ENCODE measurements at regions of chr20 and their contacts with region 1.

Region 1: DNA sequence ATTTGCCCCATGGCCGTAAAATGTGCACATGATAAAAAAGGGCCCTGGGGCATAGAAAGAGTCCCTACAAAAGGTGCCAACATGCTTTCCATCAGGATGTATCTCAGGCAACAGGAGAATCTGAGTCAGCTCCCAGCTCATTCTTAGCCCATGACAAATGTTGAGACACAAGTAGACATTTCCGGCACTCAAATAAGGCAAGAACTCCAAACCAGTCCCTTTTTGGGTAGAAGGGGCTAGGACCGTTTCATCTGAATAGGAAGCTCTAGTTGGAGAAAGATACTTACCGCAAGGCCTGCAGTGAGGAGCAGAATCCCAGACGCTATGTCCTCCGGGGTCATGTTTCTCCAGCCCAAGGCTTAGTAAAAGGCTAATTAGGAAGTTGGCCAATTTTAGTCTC is 261.0 kb upstream of the RIN2 start:
- DNase-seq: no peak
- H3K4me3 ChIP-seq: no peak overlapping the region
- H3K27ac ChIP-seq: peak overlapping the region; percentile 75 to 81
- H3K4me1 ChIP-seq: peaks cover 0 to 67% (median 55%) of the 10 kb centered on the region in 4 donors
- H3K27me3 ChIP-seq: no peaks in the 10 kb centered on the region
- CTCF ChIP-seq: no peak

Region 2: DNA sequence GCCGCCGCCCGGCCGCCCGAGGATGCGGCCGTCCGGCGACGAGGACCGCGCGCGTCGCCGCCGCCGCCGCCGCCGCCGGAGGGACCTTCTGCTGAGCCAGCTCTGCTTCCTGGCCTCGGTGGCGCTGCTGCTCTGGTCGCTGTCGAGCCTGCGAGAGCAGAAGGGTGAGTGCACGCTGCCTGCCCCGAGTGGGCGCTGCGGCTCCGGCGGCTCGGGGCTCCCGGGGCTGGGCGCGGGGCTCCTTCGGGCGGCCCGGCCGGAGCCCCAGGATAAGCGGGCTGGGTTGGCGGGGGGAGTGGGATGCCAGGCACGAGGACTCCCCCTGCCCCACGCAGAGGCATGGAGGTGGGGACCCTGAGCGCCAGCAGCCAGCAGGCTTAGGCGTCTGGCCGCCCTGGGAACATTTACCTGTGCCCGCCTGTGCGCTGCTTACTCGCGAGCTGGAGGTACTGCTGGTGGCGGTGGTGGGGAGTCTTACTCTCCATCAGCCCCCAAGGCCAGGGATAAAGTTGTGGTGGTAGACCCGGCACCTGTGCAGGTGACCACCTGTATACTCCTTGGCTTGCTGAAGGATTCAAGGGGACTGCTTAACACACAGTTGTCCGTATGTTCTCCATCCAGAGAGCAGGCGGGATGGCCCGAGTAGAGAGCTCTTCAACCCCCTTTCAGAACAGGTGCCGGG is 284.1 kb before region 1 on chr20:
- intact Hi-C with region 1: loop called (anchors 5 kb)
- DNase-seq: peak; percentile 68 to 87
- H3K4me3 ChIP-seq: peak overlapping the region; percentile 80 to 81
- H3K27ac ChIP-seq: peak overlapping the region; percentile 79 to 84
- H3K4me1 ChIP-seq: peaks cover 0 to 51% (median 25%) of the 10 kb centered on the region in 4 donors
- H3K27me3 ChIP-seq: no peaks in the 10 kb centered on the region
- CTCF ChIP-seq: peak; percentile 54 to 56

Region 3: DNA sequence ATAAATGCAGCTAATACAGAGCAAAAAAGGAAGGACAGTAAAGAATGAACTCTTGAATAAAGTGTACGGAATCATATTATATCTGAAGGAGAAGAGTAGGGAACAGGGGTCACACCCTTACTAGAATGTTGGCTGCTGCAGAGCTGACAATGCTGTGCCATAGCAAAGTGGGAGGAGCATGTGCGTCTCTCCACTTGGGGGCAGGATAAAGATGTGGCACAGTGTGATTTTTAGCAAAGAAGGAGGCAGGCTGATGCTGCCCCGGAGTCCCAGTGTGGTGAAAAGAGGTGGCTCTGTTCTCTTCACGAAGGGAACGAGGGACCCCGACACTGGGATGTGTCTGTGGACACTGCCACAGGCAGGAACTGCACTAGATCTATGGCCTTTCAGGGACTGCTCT is 938.4 kb after region 1 on chr20:
- intact Hi-C with region 1: no loop called
- DNase-seq: no peak
- H3K4me3 ChIP-seq: no peak overlapping the region
- H3K27ac ChIP-seq: no peak overlapping the region
- H3K4me1 ChIP-seq: no peaks in the 10 kb centered on the region
- H3K27me3 ChIP-seq: no peaks in the 10 kb centered on the region
- CTCF ChIP-seq: no peak

Measured in tibial artery (tissue), 4 donors.